Activated CD8-positive, alpha-beta memory T cell treated with anti-CD3 and anti-CD28 coated beads, Interleukin-2, amount 10 ng/mL, durations not matched to agents 7 days and 5 days (primary cell): ENCODE measurements at regions of chr3 and their contacts with region 1.

Region 1: GRCh38 chr3:59052803-59053411 is 3.1 kb upstream of the CFAP20DC start:
- DNase-seq: no peak
- ATAC-seq: no peak
- H3K4me3 Mint-ChIP-seq: no peak overlapping the region
- H3K27ac Mint-ChIP-seq: no peak overlapping the region
- H3K4me1 Mint-ChIP-seq: peaks cover 10% of the 10 kb centered on the region
- H3K27me3 Mint-ChIP-seq: peaks cover 8% of the 10 kb centered on the region

Region 2: DNA sequence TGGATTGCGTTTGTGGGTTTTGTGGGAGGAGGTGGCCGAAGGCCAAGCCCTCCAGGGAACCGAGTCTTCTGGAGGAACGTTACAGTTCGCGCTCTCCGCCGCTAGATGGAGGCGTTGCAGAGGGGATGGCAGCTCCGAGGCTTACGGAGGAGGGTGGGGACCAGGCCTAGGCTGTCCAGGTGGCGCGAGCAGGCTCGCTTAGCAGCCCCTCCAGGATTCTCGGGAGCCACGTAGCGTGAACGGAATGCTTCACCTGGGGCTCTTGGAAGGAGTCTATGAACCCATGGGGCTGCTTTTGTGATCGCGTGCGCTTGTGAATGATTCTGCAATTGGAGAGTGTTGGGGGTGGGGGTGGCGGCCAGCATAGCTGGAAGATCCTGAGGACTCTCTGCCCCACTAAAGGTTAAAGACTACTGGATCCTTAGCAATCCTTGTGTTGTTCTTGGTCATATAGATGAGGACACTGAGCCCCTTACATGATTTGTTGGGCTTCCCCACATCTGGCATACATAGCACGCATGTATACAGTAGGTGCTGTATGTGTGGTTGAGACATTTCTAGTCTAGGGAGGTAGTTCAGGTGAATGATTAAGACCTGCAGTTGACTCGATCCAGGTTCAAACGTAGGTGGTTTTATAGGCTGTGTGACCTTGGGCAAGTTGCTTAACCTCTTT is 412.1 kb before region 1 on chr3:
- CTCF ChIA-PET with region 1: interaction called, 20 read pairs
- DNase-seq: peak; percentile 70
- ATAC-seq: peak; percentile 90
- H3K4me3 Mint-ChIP-seq: no peak overlapping the region
- H3K27ac Mint-ChIP-seq: no peak overlapping the region
- H3K4me1 Mint-ChIP-seq: no peaks in the 10 kb centered on the region
- H3K27me3 Mint-ChIP-seq: no peaks in the 10 kb centered on the region

Region 3: DNA sequence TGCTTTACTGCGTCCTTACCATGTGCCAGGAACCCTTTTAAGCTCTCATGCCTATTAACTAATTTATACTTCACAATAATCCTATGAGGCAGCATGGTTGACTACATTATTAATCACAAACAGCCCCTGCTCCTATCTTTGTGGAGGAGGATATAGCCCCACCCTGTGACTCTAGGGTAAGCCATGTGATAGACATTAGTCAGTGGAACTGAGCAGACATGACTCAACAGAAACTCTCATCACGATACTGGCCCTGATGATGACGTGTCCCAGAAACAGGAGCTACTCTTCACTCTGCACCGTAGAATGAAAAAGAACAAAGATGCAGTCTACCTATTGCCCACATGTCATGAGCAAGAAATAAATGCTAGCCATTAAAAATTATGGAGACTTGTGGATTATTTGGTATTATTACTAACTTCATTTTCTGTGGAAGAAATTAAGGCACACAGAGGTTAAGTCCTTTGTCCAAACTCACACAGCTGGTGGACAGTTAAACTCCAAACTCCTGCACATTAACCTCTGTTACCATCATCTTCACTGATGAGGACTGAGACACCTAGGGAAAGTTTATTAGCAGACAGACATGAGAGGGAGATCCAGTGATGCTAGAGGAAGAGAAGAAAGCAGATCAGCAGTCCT is 54.3 kb before region 1 on chr3:
- CTCF ChIA-PET with region 1: interaction called, 11 read pairs
- DNase-seq: peak; percentile 48
- ATAC-seq: peak; percentile 83
- H3K4me3 Mint-ChIP-seq: no peak overlapping the region
- H3K27ac Mint-ChIP-seq: no peak overlapping the region
- H3K4me1 Mint-ChIP-seq: peaks cover 4% of the 10 kb centered on the region
- H3K27me3 Mint-ChIP-seq: peaks cover 11% of the 10 kb centered on the region

Region 4: GRCh38 chr3:59027607-59028006 is 25.3 kb before region 1 on chr3:
- CTCF ChIA-PET with region 1: no interaction called
- DNase-seq: no peak
- ATAC-seq: no peak
- H3K4me3 Mint-ChIP-seq: no peak overlapping the region
- H3K27ac Mint-ChIP-seq: no peak overlapping the region
- H3K4me1 Mint-ChIP-seq: no peaks in the 10 kb centered on the region
- H3K27me3 Mint-ChIP-seq: peaks cover 9% of the 10 kb centered on the region

Region 5: DNA sequence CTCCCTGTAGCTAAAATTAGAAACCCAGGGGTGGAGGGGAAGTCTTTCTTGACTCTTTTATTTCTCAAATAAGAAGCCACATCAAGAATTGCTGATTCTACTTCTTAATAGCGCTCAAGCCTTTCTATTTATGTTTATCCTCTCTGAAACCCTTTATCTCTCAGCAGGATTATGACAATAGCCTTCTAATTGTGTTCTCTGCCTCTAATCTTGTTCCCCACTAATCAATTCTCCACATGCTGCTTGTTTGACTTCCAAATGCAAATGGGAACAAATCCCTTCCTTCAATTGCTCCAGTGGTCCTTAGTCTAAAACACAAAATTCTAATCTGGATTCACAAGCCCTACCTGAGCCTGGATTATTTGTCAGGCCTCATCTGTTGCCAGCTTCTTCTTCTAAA is 40.6 kb after region 1 on chr3:
- CTCF ChIA-PET with region 1: no interaction called
- DNase-seq: no peak
- ATAC-seq: no peak
- H3K4me3 Mint-ChIP-seq: no peak overlapping the region
- H3K27ac Mint-ChIP-seq: no peak overlapping the region
- H3K4me1 Mint-ChIP-seq: no peaks in the 10 kb centered on the region
- H3K27me3 Mint-ChIP-seq: no peaks in the 10 kb centered on the region

Region 6: DNA sequence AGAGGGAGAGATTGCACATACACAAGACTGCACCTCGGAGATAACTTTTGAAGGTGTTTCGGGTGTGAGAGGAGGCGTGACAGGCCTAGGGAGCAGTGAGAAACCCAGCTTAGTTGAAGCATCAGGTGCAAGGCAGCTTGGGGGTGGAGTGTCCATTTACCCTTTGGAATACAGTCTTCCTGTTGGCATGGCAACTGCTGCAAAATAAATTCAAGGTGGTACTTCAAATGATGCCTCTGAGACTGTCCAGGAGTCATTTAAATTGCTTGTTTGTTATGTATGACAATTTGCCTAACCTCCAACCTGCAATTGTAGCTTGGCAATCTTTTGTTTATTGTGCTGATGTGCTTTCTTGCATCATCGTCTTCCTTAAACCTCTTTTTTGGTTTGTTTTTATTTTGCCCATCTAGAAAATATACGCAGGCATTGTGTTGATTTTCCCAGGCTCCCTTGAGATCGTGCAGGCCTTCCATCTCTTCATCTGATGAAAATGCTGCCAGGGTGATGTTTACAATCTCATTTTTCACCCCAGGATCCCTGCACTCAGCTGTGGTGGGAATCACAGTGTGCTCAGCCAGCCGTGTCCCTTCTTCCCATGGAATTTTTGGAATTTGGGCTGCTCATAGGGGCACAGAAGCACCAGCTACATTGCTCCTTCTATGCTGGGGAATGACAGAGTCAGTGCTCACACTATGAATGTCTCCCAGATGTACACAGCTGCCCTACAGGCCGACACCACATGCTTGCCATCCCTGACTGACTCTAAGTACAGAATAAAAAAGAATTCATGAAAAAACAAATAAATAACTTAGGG is 580.1 kb after region 1 on chr3:
- CTCF ChIA-PET with region 1: no interaction called
- DNase-seq: no peak
- ATAC-seq: no peak
- H3K4me3 Mint-ChIP-seq: no peak overlapping the region
- H3K27ac Mint-ChIP-seq: no peak overlapping the region
- H3K4me1 Mint-ChIP-seq: no peaks in the 10 kb centered on the region
- H3K27me3 Mint-ChIP-seq: no peaks in the 10 kb centered on the region